Vagina (tissue), 2 donors: ENCODE measurements at regions of chr11 and their contacts with region 1.

Region 1: GRCh38 chr11:121591405-121592033 is 138.8 kb upstream of the SORL1-AS1 start:
- DNase-seq: no peak
- H3K4me3 ChIP-seq: no peak overlapping the region
- H3K27ac ChIP-seq: no peak overlapping the region
- H3K4me1 ChIP-seq: peaks cover 15% of the 10 kb centered on the region
- H3K27me3 ChIP-seq: no peaks in the 10 kb centered on the region
- CTCF ChIP-seq: peak; percentile 67 to 87 (median 80)
- POLR2A ChIP-seq: no peak

Region 2: GRCh38 chr11:120344302-120345004 is 1247.1 kb before region 1 on chr11:
- intact Hi-C with region 1: no loop called
- DNase-seq: no peak
- H3K4me3 ChIP-seq: no peak overlapping the region
- H3K27ac ChIP-seq: no peak overlapping the region
- H3K4me1 ChIP-seq: peaks cover 93% of the 10 kb centered on the region
- H3K27me3 ChIP-seq: no peaks in the 10 kb centered on the region
- CTCF ChIP-seq: no peak
- POLR2A ChIP-seq: no peak

Region 3: DNA sequence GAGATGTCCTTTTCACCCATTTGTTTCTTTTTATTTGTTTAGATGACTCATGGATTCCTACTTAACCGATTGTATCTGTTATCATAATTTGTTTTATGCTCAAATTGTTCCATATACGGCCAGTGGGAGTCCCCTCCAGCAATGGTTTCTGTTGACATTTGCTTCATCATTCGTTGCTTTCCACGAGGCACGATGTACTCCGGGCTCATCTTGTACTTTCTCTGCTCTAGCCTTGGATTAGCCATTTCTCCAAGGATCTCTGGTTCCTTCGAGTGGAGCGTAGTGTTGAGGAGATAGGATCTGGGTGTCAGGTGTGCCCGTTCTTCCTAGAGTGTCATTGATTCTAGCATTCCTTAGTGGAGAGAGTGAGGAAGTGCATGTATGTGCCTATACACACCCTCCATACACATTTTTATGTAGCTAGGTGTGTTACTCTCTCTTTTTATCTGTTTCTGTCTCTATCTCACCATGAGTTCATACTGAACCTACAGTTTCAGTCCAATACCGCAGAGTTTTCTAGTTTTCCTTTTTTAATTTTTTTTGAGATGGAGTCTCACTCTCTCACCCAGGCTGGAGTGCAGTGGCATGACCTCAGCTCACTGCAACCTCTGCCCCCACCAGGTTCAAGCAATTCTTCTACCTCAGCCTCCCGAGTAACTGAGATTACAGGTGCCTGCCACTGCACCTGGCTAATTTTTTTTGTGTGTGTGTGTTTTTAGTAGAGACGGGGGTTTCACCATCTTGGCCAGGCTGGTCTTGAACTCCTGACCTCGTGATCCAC is 459.1 kb before region 1 on chr11:
- intact Hi-C with region 1: no loop called
- DNase-seq: no peak
- H3K4me3 ChIP-seq: no peak overlapping the region
- H3K27ac ChIP-seq: no peak overlapping the region
- H3K4me1 ChIP-seq: no peaks in the 10 kb centered on the region
- H3K27me3 ChIP-seq: no peaks in the 10 kb centered on the region
- CTCF ChIP-seq: no peak
- POLR2A ChIP-seq: no peak

Region 4: GRCh38 chr11:121249039-121249663 is 342.4 kb before region 1 on chr11:
- intact Hi-C with region 1: loop called (anchors 10 kb)
- DNase-seq: no peak
- H3K4me3 ChIP-seq: no peak overlapping the region
- H3K27ac ChIP-seq: no peak overlapping the region
- H3K4me1 ChIP-seq: peaks cover 4% of the 10 kb centered on the region
- H3K27me3 ChIP-seq: no peaks in the 10 kb centered on the region
- CTCF ChIP-seq: peak; percentile 43 to 68 (median 59)
- POLR2A ChIP-seq: no peak

Region 5: DNA sequence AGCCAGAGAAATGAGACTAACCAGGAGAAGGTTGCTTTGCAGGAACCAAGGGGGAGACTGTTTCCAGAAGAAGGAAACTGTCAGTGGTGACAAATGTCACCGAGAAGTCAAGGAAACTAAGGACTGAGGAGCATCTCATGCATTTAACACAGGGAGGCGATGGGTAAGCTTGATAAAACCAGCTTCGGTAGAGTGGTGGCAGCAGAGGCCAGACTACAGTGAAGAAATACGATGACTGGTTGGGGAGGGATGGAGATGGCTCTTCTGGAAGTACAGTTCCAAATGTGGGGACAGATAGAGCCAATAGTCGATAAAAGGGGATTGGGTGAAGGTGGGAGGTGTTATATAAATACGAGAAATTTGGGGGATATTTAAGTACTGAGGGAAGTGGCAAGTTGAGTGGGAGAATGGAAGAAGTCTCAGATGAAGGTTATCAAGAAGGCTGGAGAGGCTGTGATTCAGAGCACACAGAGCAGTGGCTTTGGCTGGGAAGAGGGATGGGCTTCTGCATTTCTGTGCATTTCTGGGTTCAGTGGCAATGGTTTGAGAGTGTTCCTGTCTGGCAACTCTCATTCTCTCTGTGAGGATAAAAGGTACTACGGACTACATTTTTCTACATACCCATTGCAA is 269.8 kb before region 1 on chr11:
- intact Hi-C with region 1: loop called (anchors 5 kb)
- DNase-seq: no peak
- H3K4me3 ChIP-seq: no peak overlapping the region
- H3K27ac ChIP-seq: no peak overlapping the region
- H3K4me1 ChIP-seq: peaks cover 10% of the 10 kb centered on the region
- H3K27me3 ChIP-seq: no peaks in the 10 kb centered on the region
- CTCF ChIP-seq: peak in 1 of 3 experiments; percentile 10
- POLR2A ChIP-seq: no peak